ENCODE measurements at regions of chr4 and their contacts with region 1.

Region 1: DNA sequence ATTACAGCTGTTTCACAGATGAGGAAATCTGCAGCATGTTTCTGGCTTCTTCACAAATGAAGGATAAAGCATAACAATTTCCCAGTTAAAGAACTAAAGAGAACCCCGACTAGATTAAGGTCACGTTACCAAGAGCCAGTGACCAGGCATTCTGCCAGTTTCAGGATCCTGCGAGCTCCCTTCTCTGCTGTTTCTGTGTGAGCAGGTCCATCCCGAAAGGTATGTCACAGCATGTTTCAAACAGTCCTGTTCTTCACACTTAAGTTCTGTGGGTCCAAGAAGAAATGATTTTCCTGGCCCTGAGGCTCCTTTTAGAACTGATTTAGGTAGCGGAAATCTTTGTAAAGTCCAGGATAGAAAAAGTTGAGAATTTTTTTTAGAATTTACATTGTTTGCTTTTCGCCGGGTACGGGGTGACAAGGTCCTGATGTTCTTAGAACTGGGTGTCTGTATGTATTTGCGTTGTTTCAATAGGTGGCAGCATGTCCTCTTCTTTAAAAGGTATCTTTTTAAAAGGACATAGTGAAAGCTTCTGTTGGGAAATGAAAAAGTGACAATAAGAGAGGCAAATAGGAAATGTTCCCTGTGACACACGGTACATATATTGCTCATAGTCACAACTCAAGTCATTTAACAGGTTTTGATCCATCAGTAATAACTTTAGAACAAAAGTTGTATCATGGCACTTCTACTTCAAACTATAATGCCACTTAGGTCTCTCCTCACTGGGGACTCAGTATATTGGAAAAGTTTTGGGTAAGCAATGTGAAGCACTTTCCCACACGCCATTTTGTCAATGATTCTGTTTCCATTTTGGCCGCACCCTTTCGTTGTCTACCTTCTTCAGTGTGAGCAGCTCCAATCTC is 18.4 kb downstream of the IL21 start:
- DNase-seq: peak in 2 of 4 donors; percentile 12 to 28
- ATAC-seq: peak; percentile 90
- H3K4me3 ChIP-seq: no peak overlapping the region
- H3K27ac ChIP-seq: no peak overlapping the region
- H3K4me1 ChIP-seq: no peaks in the 10 kb centered on the region
- H3K27me3 ChIP-seq: peaks cover 7 to 26% of the 10 kb centered on the region in 2 donors
- CTCF ChIP-seq: peak in 1 of 2 donors; percentile 36

Region 2: GRCh38 chr4:122285285-122285684 is 317.2 kb before region 1 on chr4:
- intact Hi-C with region 1: no loop called
- DNase-seq: no peak
- ATAC-seq: no peak
- H3K4me3 ChIP-seq: no peak overlapping the region
- H3K27ac ChIP-seq: no peak overlapping the region
- H3K4me1 ChIP-seq: no peaks in the 10 kb centered on the region
- H3K27me3 ChIP-seq: no peaks in the 10 kb centered on the region
- CTCF ChIP-seq: no peak

Region 3: GRCh38 chr4:122716825-122717448 is 114.4 kb after region 1 on chr4:
- intact Hi-C with region 1: loop called in 1 of 2 experiments (anchors 10 kb)
- DNase-seq: peak in 2 of 4 donors; percentile 35 to 49
- ATAC-seq: peak; percentile 91
- H3K4me3 ChIP-seq: no peak overlapping the region
- H3K27ac ChIP-seq: no peak overlapping the region
- H3K4me1 ChIP-seq: no peaks in the 10 kb centered on the region
- H3K27me3 ChIP-seq: no peaks in the 10 kb centered on the region
- CTCF ChIP-seq: peak; percentile 75 to 76

Region 4: DNA sequence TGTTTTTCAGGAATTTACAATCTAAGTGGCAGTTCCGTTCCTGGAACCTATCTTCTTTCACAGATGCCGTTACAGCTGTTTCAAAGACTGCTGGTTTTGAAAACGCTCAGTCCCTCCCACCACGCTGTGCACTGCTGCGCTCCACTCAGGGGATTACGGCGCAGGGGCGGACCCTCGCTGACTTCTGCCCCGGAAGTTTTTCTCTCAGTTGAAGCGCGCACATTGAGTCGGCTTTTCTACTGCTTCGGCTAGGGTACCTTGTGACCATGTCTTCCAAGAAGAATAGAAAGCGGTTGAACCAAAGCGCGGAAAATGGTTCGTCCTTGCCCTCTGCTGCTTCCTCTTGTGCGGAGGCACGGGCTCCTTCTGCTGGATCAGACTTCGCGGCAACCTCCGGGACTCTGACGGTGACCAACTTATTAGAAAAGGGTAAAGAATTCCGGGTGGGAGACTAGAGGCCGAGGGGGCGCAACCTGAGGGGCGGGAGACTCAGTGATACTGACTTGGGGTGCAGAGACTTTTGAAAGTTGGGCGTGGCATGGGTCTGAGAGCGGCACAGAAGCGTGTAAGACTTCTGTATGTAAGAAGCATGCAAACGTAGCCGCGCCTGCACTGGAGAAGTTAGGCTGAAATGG is 320.5 kb after region 1 on chr4:
- intact Hi-C with region 1: loop called in 1 of 2 experiments (anchors 10 kb)
- DNase-seq: peak; percentile 85 to 91 (median 88)
- ATAC-seq: peak; percentile 98
- H3K4me3 ChIP-seq: peak overlapping the region; percentile 71 to 92
- H3K27ac ChIP-seq: peak overlapping the region; percentile 80 to 82
- H3K4me1 ChIP-seq: peaks cover 0 to 21% of the 10 kb centered on the region in 2 donors
- H3K27me3 ChIP-seq: no peaks in the 10 kb centered on the region
- CTCF ChIP-seq: no peak

Region 5: DNA sequence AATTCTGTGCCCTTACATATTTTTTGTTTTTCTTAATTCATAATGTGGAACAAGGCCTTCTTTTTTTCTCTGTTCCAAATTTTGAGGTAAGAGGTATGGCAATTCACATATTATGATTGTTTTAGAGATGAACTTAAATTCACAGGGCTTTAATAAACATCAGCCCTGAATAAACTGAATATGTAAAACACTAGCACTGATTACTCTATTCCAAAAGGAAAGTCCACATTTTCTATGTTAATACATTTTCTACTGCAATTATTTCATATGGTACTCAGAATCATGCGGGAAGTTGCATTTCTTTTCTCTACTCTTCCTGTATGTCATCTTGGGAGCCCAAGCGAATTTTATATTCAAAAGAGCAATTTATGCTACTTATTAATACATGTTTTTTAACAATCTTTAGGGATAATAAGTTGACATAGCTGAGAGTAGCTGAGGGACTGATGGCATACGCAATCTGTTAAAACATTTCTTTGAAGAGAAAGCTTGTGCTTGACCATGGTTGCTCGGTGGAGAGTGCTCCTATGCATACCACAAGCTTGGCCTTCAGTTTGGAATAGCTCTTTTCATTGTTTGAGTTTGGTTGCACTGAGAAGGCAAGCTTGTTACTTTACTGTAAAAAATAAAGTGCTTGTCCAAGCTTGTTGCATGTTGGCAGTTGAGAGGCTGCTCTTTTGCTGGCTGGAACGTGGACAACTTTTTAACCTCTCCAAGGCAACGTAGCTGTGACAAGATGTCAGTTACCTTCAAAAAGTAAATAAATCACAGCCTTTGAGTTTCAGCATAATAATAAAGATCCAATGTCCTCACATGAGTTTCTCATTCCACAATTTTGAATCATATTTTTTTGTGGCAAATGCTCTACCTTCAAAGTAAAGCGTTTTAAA is 597.8 kb after region 1 on chr4:
- intact Hi-C with region 1: no loop called
- DNase-seq: peak in 1 of 4 donors; percentile 22
- ATAC-seq: peak; percentile 91
- H3K4me3 ChIP-seq: no peak overlapping the region
- H3K27ac ChIP-seq: no peak overlapping the region
- H3K4me1 ChIP-seq: no peaks in the 10 kb centered on the region
- H3K27me3 ChIP-seq: no peaks in the 10 kb centered on the region
- CTCF ChIP-seq: no peak

Measured in left lung (tissue), 14 donors.